ENCODE measurements at regions of chr3 and their contacts with region 1.

Region 1: GRCh38 chr3:14672588-14672987 is 2.4 kb upstream of the C3orf20 start:
- DNase-seq: no peak
- H3K4me3 ChIP-seq: no peak overlapping the region
- H3K27ac ChIP-seq: no peak overlapping the region
- H3K4me1 ChIP-seq: no peaks in the 10 kb centered on the region
- H3K27me3 ChIP-seq: no peaks in the 10 kb centered on the region
- CTCF ChIP-seq: no peak
- EP300 ChIP-seq: no peak
- POLR2A ChIP-seq: no peak

Region 2: GRCh38 chr3:14775011-14775410 is 102.4 kb after region 1 on chr3:
- intact Hi-C with region 1: loop called (anchors 5 kb)
- DNase-seq: peak; percentile 85
- H3K4me3 ChIP-seq: no peak overlapping the region
- H3K27ac ChIP-seq: no peak overlapping the region
- H3K4me1 ChIP-seq: no peaks in the 10 kb centered on the region
- H3K27me3 ChIP-seq: no peaks in the 10 kb centered on the region
- CTCF ChIP-seq: no peak
- EP300 ChIP-seq: no peak
- POLR2A ChIP-seq: no peak